Colonic mucosa (tissue), 4 donors: ENCODE measurements at regions of chr14 and their contacts with region 1.

Region 1: DNA sequence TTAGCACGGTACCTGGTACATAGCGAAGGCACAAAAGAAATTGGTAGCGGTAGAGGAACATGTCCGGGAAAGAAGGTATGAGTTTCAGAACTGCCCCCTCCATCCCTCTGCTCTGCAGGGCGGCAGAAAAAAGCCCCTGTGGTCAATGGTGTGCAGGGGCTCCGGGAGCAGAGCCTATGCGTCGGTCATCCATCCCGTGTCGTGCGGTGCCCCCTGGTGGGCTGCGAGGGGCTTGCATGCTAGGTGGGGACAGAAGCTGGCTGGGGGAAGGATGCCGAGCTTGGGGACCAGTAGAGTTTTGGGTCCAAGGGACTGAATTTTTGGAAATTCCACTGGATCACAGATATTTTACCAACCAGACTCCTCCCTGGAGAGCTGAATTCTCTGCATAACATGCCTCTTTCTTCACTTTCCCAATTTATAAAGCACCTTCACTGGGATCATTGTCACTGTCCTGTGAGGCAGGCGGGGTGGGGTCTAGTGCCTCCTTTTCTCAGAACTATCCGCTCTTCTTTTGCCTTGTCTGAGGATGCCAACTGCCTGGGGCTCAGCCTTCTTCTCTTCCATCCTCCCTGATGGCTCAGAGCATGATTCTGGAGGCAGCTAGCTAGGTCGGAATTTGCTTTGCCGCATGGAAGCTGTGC is 148.7 kb downstream of the SMOC1 start:
- DNase-seq: peak; percentile 75
- H3K4me3 ChIP-seq: no peak overlapping the region
- H3K27ac ChIP-seq: no peak overlapping the region
- H3K4me1 ChIP-seq: no peaks in the 10 kb centered on the region
- H3K27me3 ChIP-seq: no peaks in the 10 kb centered on the region
- CTCF ChIP-seq: peak; percentile 88

Region 2: GRCh38 chr14:69580009-69580577 is 447.8 kb before region 1 on chr14:
- intact Hi-C with region 1: loop called (anchors 10 kb)
- DNase-seq: no peak
- H3K4me3 ChIP-seq: no peak overlapping the region
- H3K27ac ChIP-seq: no peak overlapping the region
- H3K4me1 ChIP-seq: no peaks in the 10 kb centered on the region
- H3K27me3 ChIP-seq: peaks cover 13% of the 10 kb centered on the region
- CTCF ChIP-seq: no peak

Region 3: GRCh38 chr14:69726761-69727511 is 301.0 kb before region 1 on chr14:
- intact Hi-C with region 1: loop called (anchors 5 kb)
- DNase-seq: peak; percentile 86
- H3K4me3 ChIP-seq: peak overlapping the region; percentile 37
- H3K27ac ChIP-seq: no peak overlapping the region
- H3K4me1 ChIP-seq: peaks cover 3% of the 10 kb centered on the region
- H3K27me3 ChIP-seq: no peaks in the 10 kb centered on the region
- CTCF ChIP-seq: peak; percentile 96

Region 4: GRCh38 chr14:69818757-69819191 is 209.1 kb before region 1 on chr14:
- intact Hi-C with region 1: loop called (anchors 2 kb)
- DNase-seq: peak; percentile 52
- H3K4me3 ChIP-seq: no peak overlapping the region
- H3K27ac ChIP-seq: no peak overlapping the region
- H3K4me1 ChIP-seq: no peaks in the 10 kb centered on the region
- H3K27me3 ChIP-seq: no peaks in the 10 kb centered on the region
- CTCF ChIP-seq: peak; percentile 90

Region 5: GRCh38 chr14:69879175-69880043 is 148.5 kb before region 1 on chr14 and contains the start of gene SMOC1:
- intact Hi-C with region 1: loop called (anchors 5 kb)
- DNase-seq: peak; percentile 32
- H3K4me3 ChIP-seq: peak within 1 kb of the TSS; percentile 7
- H3K27ac ChIP-seq: no peak within 1 kb of the TSS
- H3K4me1 ChIP-seq: no peaks in the 10 kb centered on the region
- H3K27me3 ChIP-seq: peaks cover 21% of the 10 kb centered on the region
- CTCF ChIP-seq: no peak
- total RNA-seq, gene SMOC1: 0.50 to 0.67 TPM

Region 6: DNA sequence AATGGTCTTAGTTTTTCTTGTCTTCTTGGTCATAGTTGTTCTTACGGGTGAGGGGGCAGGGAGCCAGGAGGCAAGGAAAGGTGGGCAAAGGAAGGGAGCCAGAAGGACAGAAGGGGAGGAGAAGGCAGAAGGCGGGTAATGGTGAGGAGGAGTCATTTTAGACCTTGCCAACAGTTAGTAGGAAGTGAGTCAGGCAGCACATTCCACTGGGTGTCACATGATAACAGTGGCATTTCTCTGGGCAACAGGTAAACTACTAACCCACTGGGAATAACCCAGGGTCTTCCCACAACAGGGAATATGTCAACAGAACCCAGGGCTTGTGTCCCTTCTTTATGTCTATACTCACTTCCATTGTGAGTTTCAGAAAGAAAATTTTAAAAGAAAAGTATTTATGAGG is 33.2 kb after region 1 on chr14:
- intact Hi-C with region 1: no loop called
- DNase-seq: no peak
- H3K4me3 ChIP-seq: no peak overlapping the region
- H3K27ac ChIP-seq: no peak overlapping the region
- H3K4me1 ChIP-seq: no peaks in the 10 kb centered on the region
- H3K27me3 ChIP-seq: no peaks in the 10 kb centered on the region
- CTCF ChIP-seq: no peak

Region 7: DNA sequence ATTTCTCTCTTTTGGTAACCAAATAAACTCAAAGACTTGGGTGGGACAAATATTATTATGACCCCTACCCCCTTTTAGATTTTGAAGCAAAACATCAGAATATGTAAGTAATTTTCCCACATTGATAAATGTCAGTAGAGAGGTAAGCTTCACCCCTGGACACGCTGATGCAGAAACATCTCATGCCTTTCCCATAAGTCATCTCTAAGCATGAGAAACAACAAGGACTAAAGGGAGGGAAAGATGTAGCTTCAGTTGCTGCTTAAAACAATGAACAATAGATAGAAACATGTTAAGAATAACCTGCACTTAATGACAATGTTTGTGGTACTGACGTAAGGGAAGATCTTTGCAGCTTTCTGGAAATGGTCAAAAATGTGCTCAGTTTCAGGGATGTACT is 217.1 kb after region 1 on chr14:
- intact Hi-C with region 1: no loop called
- DNase-seq: no peak
- H3K4me3 ChIP-seq: no peak overlapping the region
- H3K27ac ChIP-seq: no peak overlapping the region
- H3K4me1 ChIP-seq: no peaks in the 10 kb centered on the region
- H3K27me3 ChIP-seq: no peaks in the 10 kb centered on the region
- CTCF ChIP-seq: no peak